ENCODE measurements at regions of chr17 and their contacts with region 1.

Region 1: DNA sequence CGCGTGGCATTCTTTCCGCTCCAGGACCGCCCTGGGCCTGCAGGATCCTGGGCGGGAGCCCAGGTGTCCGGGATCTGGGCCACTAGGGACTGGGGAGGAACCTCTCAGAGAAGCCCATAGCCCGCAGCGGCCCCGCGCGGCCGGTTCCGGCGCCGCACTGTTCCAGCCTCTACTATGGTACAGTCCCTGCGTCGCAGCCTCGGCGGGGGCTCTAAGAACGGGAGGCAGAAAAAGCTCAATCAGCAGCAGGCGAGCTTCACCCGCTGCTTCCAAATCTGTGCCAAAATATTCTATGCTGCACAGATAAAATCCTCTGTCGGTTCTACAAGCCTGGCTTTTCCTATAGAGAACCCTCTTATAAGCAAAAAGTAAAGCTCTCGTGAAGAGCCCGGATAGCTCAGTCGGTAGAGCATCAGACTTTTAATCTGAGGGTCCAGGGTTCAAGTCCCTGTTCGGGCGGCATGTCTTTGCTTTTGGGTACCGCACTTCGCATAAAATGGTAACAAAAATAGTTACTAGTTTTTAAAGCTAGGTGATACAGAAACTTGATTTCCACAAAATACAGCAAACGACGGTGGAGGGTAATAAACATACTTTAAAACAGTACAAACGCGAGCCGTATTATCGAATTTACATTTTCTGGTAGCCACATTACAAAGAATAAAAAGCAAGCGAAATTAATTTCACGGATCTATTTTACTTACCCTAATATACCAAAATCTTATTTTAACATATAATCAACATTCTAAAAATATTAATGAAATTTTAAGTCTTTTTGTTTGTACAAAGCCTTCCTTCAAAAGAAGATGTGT is 661 bp upstream of the ALOXE3 start:
- DNase-seq: peak; percentile 90
- ATAC-seq: peak; percentile 70
- H3K4me3 Mint-ChIP-seq: peak overlapping the region; percentile 89
- H3K27ac Mint-ChIP-seq: peak overlapping the region; percentile 95
- H3K4me1 Mint-ChIP-seq: peaks cover 51% of the 10 kb centered on the region
- H3K27me3 Mint-ChIP-seq: peaks cover 57% of the 10 kb centered on the region

Region 2: DNA sequence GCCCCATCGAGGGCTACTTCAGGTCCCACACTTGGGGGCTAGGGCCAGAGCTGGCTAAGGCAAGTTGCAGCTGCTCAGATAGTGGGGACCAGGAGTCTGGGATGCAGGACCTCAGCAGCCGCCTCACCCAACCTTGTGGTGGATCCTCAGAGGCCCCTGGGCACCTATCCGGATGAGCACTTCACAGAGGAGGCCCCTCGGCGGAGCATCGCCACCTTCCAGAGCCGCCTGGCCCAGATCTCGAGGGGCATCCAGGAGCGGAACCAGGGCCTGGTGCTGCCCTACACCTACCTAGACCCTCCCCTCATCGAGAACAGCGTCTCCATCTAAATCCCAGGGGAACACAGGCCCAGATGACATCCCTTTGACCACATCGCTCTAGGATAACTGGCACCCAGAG is 70.7 kb before region 1 on chr17:
- CTCF ChIA-PET with region 1: no interaction called
- POLR2A ChIA-PET with region 1: no interaction called
- DNase-seq: no peak
- ATAC-seq: no peak
- H3K4me3 Mint-ChIP-seq: no peak overlapping the region
- H3K27ac Mint-ChIP-seq: no peak overlapping the region
- H3K4me1 Mint-ChIP-seq: no peaks in the 10 kb centered on the region
- H3K27me3 Mint-ChIP-seq: peaks cover 13% of the 10 kb centered on the region

Region 3: DNA sequence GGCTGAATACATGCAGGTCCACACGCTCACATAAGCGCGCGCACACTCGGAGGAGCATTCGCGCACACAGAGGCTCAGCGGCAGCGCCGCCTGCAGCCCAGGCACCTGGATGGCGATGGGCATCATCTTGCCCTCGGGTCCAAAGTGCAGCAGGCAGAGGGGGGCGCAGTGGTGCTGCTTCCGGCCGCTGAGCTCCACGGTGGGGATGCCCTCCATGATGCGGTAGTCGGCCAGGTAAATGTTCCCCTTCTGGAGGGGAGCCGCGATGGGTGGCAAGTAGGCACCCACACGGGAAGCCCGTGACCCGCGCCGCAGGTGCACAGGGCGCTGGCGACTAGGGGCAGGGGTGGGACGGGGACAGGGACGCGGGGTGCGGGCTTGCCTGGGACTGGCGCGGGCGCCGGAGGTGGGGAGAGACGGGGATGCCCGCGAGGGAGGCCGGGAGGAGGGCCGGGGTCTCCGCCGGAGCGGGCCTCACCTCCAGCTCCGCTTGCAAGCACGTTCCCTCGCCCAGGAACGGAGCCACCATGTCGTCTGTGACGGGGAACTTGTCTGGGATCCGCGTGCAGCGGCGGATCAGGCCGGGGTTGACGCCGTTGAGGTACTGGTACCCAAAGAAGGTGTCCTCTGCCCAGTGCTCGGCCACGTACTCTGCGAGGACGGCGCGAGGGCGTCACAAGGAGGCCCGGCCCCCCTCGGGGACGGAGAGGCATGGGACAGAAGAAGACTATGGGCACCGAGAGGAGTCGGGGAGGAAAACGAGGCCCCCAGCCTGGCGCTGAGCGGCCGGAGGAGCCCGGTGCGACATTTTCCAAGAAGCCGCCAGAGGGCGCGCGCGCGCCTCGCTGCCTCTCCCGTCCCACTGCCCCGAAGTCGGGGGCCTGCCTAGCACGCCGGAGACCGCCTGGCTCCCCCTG is 39.4 kb before region 1 on chr17:
- CTCF ChIA-PET with region 1: interaction called, 50 read pairs
- POLR2A ChIA-PET with region 1: no interaction called
- DNase-seq: peak; percentile 85
- ATAC-seq: peak; percentile 87
- H3K4me3 Mint-ChIP-seq: peak overlapping the region; percentile 86
- H3K27ac Mint-ChIP-seq: peak overlapping the region; percentile 83
- H3K4me1 Mint-ChIP-seq: peaks cover 20% of the 10 kb centered on the region
- H3K27me3 Mint-ChIP-seq: peaks cover 16% of the 10 kb centered on the region

Region 4: GRCh38 chr17:8131844-8132441 is 13.0 kb after region 1 on chr17:
- CTCF ChIA-PET with region 1: interaction called, 52 read pairs
- POLR2A ChIA-PET with region 1: no interaction called
- DNase-seq: no peak
- ATAC-seq: no peak
- H3K4me3 Mint-ChIP-seq: no peak overlapping the region
- H3K27ac Mint-ChIP-seq: no peak overlapping the region
- H3K4me1 Mint-ChIP-seq: peaks cover 8% of the 10 kb centered on the region
- H3K27me3 Mint-ChIP-seq: peaks cover 17% of the 10 kb centered on the region

Region 5: GRCh38 chr17:8162233-8162996 is 43.4 kb after region 1 on chr17 and contains the start of gene VAMP2:
- CTCF ChIA-PET with region 1: interaction called, 72 read pairs
- POLR2A ChIA-PET with region 1: interaction called, 4 read pairs
- DNase-seq: peak; percentile 87
- ATAC-seq: peak; percentile 58
- H3K4me3 Mint-ChIP-seq: peak within 1 kb of the TSS; percentile 79
- H3K27ac Mint-ChIP-seq: peak within 1 kb of the TSS; percentile 94
- H3K4me1 Mint-ChIP-seq: peaks cover 63% of the 10 kb centered on the region
- H3K27me3 Mint-ChIP-seq: no peaks in the 10 kb centered on the region
- total RNA-seq, gene VAMP2: 56.3 to 56.7 TPM

Region 6: GRCh38 chr17:8222630-8223356 is 103.8 kb after region 1 on chr17:
- CTCF ChIA-PET with region 1: interaction called, 51 read pairs
- POLR2A ChIA-PET with region 1: interaction called, 14 read pairs
- DNase-seq: peak; percentile 92
- ATAC-seq: peak; percentile 49
- H3K4me3 Mint-ChIP-seq: peak overlapping the region; percentile 92
- H3K27ac Mint-ChIP-seq: peak overlapping the region; percentile 98
- H3K4me1 Mint-ChIP-seq: peaks cover 58% of the 10 kb centered on the region
- H3K27me3 Mint-ChIP-seq: peaks cover 2% of the 10 kb centered on the region